Heart left ventricle (tissue), 16 donors: ENCODE measurements at regions of chr1 and their contacts with region 1.

Region 1: GRCh38 chr1:183804881-183805841 is at the start of gene RGL1:
- DNase-seq: peak; percentile 73 to 85 (median 78)
- ATAC-seq: peak; percentile 76 to 95 (median 89)
- H3K4me3 ChIP-seq: peak within 1 kb of the TSS; percentile 45 to 80 (median 66)
- H3K27ac ChIP-seq: peak within 1 kb of the TSS; percentile 33 to 86 (median 76)
- H3K4me1 ChIP-seq: peaks cover 0 to 51% (median 26%) of the 10 kb centered on the region in 12 donors
- H3K27me3 ChIP-seq: no peaks in the 10 kb centered on the region
- CTCF ChIP-seq: no peak
- POLR2A ChIP-seq: peak in 1 of 2 donors; percentile 58
- total RNA-seq, gene RGL1: 11.7 to 50.6 (median 15.9) TPM

Region 2: DNA sequence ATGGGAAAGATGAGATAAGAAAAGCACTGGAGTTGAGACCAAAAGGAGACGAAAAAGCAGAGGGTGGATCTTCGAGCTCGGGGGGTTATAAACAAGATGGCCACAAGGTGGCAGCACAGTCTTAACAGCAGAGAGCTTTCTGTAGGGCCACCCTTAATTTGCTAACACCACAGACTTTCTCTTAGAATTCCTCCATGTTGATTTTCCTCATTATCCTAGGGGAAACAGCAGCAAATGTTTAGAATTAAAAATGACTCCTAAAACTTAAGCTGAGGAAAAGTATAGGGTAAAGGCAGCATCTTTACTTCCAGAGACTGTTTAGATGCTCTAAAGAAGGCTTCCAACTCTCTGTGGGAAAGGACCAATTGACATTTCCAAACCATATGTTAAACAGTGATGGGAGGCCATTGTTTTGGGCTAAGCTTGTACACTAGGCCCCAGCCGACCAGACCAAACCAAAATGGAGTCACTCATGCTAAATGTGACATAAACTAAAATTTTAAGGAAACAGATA is 149.5 kb before region 1 on chr1:
- intact Hi-C with region 1: loop called in 1 of 10 experiments (anchors 10 kb)
- DNase-seq: peak; percentile 71 to 81 (median 77)
- ATAC-seq: peak; percentile 52 to 79 (median 74)
- H3K4me3 ChIP-seq: no peak overlapping the region
- H3K27ac ChIP-seq: peak overlapping the region in 1 of 12 donors; percentile 53
- H3K4me1 ChIP-seq: peaks cover 5 to 53% (median 37%) of the 10 kb centered on the region in 12 donors
- H3K27me3 ChIP-seq: no peaks in the 10 kb centered on the region
- CTCF ChIP-seq: peak; percentile 85 to 96 (median 90)
- POLR2A ChIP-seq: no peak

Region 3: GRCh38 chr1:183734543-183735036 is 70.6 kb before region 1 on chr1:
- intact Hi-C with region 1: loop called in 1 of 10 experiments (anchors 10 kb)
- DNase-seq: peak; percentile 38 to 65 (median 52)
- ATAC-seq: peak; percentile 73 to 88 (median 80)
- H3K4me3 ChIP-seq: peak overlapping the region in 1 of 12 donors; percentile 2
- H3K27ac ChIP-seq: peak overlapping the region in 11 of 12 donors; percentile 4 to 60 (median 31)
- H3K4me1 ChIP-seq: peaks cover 0 to 70% (median 40%) of the 10 kb centered on the region in 12 donors
- H3K27me3 ChIP-seq: no peaks in the 10 kb centered on the region
- CTCF ChIP-seq: no peak
- POLR2A ChIP-seq: no peak

Region 4: GRCh38 chr1:183871142-183871541 is 66.0 kb after region 1 on chr1:
- intact Hi-C with region 1: loop called in 4 of 10 experiments (anchors 5 to 10 kb)
- DNase-seq: no peak
- ATAC-seq: peak in 2 of 4 donors; percentile 33 to 70
- H3K4me3 ChIP-seq: no peak overlapping the region
- H3K27ac ChIP-seq: peak overlapping the region in 11 of 12 donors; percentile 56 to 84 (median 81)
- H3K4me1 ChIP-seq: peaks cover 10 to 80% (median 54%) of the 10 kb centered on the region in 12 donors
- H3K27me3 ChIP-seq: no peaks in the 10 kb centered on the region
- CTCF ChIP-seq: no peak
- POLR2A ChIP-seq: no peak

Region 5: DNA sequence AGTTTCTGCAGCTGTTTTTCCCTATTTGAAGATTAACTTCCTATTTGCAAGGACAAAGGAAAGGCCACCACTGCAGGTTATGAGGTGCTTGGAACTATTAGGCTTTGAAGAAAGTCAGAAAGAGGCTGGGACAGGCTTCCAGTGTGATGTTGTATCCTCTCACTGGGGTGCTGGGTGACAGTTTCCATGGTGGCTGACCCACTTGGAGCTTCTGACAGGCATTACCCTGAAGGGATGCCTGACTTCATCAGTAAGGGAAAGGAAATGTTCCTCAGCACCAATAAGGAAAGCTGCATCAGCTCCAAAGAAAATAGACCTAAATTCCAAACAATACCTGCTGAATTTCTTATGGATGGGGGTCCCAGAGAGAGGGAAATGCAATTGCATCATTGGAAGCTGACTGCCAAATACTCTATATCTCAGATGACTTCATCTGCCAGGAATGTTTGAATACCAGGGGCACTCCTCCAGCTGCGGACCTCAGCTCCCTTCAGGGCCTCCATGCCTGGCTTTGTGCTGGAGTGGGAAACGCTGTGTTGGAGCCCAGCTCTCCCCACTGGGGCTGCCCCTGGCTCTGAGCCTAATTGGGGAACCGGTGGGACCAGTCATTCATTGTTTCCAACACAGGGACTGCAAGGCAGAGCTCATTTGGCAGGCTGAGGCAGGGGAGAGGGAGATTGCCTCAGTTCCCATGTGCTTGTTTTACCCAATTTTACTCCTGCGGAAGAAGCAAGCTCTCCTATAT is 76.4 kb after region 1 on chr1:
- intact Hi-C with region 1: loop called in 4 of 10 experiments (anchors 5 to 10 kb)
- DNase-seq: peak; percentile 65 to 76 (median 69)
- ATAC-seq: peak; percentile 44 to 90 (median 78)
- H3K4me3 ChIP-seq: no peak overlapping the region
- H3K27ac ChIP-seq: peak overlapping the region in 11 of 12 donors; percentile 5 to 80 (median 41)
- H3K4me1 ChIP-seq: peaks cover 9 to 93% (median 47%) of the 10 kb centered on the region in 12 donors
- H3K27me3 ChIP-seq: no peaks in the 10 kb centered on the region
- CTCF ChIP-seq: no peak
- POLR2A ChIP-seq: no peak

Region 6: GRCh38 chr1:183915625-183916510 is 110.7 kb after region 1 on chr1:
- intact Hi-C with region 1: loop called in 1 of 10 experiments (anchors 10 kb)
- DNase-seq: peak in 4 of 5 donors; percentile 76 to 81 (median 78)
- ATAC-seq: peak; percentile 22 to 85 (median 84)
- H3K4me3 ChIP-seq: no peak overlapping the region
- H3K27ac ChIP-seq: peak overlapping the region in 7 of 12 donors; percentile 31 to 70 (median 44)
- H3K4me1 ChIP-seq: peaks cover 0 to 50% (median 18%) of the 10 kb centered on the region in 12 donors
- H3K27me3 ChIP-seq: no peaks in the 10 kb centered on the region
- CTCF ChIP-seq: peak; percentile 73 to 93 (median 86)
- POLR2A ChIP-seq: no peak

Region 7: DNA sequence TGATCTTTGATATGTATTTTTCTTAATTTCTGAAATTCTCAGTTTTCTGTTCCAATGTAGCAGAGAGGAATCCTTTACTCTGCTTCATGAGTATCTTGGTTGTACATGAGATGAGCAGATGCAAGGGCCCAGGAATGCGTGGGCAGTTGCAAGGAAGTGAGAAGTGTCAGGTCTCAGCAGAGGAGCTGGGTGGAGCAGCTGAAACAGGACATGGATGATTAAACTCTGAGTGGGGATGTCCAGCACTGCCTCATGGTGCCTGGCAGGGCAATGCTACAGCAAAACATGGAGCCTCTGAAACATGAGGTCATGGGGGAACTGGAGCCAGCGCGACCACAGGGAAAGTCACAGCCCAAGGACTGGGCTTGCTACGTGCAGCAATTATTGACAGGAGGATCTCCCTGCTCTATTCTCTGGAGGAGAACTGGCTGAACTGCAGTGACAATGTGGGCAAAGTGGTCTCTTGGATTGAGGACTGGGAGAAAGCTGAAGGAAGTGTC is 184.0 kb after region 1 on chr1:
- intact Hi-C with region 1: no loop called
- DNase-seq: peak in 4 of 5 donors; percentile 39 to 63 (median 48)
- ATAC-seq: peak; percentile 49 to 87 (median 81)
- H3K4me3 ChIP-seq: no peak overlapping the region
- H3K27ac ChIP-seq: peak overlapping the region in 5 of 12 donors; percentile 0 to 61 (median 38)
- H3K4me1 ChIP-seq: peaks cover 0 to 49% (median 20%) of the 10 kb centered on the region in 12 donors
- H3K27me3 ChIP-seq: no peaks in the 10 kb centered on the region
- CTCF ChIP-seq: no peak
- POLR2A ChIP-seq: no peak